ENCODE measurements at regions of chr10 and their contacts with region 1.

Region 1: GRCh38 chr10:69237528-69238159 is 17.5 kb downstream of the HKDC1 start:
- DNase-seq: peak; percentile 82 to 89 (median 86)
- ATAC-seq: peak; percentile 96
- H3K4me3 ChIP-seq: no peak overlapping the region
- H3K27ac ChIP-seq: no peak overlapping the region
- H3K4me1 ChIP-seq: no peaks in the 10 kb centered on the region
- H3K27me3 ChIP-seq: no peaks in the 10 kb centered on the region
- CTCF ChIP-seq: peak; percentile 68 to 95 (median 90)
- POLR2A ChIP-seq: no peak

Region 2: DNA sequence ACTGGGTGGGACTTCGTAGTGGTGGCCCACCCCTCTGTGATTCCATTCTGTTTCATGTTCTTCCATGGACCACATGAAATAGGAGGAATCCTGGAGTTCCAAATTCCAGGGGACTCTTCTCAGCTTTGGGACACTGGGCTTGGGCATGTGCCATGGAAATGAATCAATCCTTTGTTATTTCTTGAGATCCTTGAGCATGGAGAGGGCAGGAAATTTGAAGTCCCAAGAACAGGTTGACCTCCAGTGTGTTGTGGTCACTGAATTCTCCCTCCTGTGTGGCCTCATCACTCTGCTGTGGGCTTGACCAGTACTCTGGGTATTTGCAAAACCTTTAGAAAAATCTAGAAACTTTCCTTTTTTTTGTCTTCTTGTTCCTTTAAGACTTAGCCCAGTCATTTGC is 156.4 kb after region 1 on chr10:
- intact Hi-C with region 1: loop called (anchors 2 kb)
- DNase-seq: no peak
- ATAC-seq: no peak
- H3K4me3 ChIP-seq: no peak overlapping the region
- H3K27ac ChIP-seq: no peak overlapping the region
- H3K4me1 ChIP-seq: peaks cover 3% of the 10 kb centered on the region
- H3K27me3 ChIP-seq: no peaks in the 10 kb centered on the region
- CTCF ChIP-seq: no peak
- POLR2A ChIP-seq: no peak

Region 3: DNA sequence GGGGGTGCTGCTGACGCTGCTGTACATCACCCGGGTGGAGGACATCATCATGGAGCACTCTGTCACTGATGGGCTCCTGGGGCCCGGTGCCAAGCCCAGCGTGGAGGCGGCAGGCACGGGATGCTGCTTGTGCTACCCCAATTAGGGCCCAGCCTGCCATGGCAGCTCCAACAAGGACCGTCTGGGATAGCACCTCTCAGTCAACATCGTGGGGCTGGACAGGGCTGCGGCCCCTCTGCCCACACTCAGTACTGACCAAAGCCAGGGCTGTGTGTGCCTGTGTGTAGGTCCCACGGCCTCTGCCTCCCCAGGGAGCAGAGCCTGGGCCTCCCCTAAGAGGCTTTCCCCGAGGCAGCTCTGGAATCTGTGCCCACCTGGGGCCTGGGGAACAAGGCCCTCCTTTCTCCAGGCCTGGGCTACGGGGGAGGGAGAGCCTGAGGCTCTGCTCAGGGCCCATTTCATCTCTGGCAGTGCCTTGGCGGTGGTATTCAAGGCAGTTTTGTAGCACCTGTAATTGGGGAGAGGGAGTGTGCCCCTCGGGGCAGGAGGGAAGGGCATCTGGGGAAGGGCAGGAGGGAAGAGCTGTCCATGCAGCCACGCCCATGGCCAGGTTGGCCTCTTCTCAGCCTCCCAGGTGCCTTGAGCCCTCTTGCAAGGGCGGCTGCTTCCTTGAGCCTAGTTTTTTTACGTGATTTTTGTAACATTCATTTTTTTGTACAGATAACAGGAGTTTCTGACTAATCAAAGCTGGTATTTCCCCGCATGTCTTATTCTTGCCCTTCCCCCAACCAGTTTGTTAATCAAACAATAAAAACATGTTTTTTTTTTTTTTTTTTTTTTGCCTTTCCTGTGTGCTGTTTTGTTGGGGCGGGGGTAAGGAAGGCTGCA is 269.4 kb after region 1 on chr10:
- intact Hi-C with region 1: loop called (anchors 10 kb)
- DNase-seq: no peak
- ATAC-seq: peak; percentile 10
- H3K4me3 ChIP-seq: no peak overlapping the region
- H3K27ac ChIP-seq: peak overlapping the region in 3 of 4 donors; percentile 7 to 59 (median 53)
- H3K4me1 ChIP-seq: peaks cover 10% of the 10 kb centered on the region
- H3K27me3 ChIP-seq: no peaks in the 10 kb centered on the region
- CTCF ChIP-seq: no peak
- POLR2A ChIP-seq: no peak

Measured in body of pancreas (tissue), 4 donors.